Cardiac septum (tissue), 1 donor: ENCODE measurements at regions of chr3 and their contacts with region 1.

Region 1: GRCh38 chr3:128123538-128124368 is at the start of gene RUVBL1:
- DNase-seq: peak; percentile 98
- total RNA-seq, gene RUVBL1: 19.7 TPM

Region 2: DNA sequence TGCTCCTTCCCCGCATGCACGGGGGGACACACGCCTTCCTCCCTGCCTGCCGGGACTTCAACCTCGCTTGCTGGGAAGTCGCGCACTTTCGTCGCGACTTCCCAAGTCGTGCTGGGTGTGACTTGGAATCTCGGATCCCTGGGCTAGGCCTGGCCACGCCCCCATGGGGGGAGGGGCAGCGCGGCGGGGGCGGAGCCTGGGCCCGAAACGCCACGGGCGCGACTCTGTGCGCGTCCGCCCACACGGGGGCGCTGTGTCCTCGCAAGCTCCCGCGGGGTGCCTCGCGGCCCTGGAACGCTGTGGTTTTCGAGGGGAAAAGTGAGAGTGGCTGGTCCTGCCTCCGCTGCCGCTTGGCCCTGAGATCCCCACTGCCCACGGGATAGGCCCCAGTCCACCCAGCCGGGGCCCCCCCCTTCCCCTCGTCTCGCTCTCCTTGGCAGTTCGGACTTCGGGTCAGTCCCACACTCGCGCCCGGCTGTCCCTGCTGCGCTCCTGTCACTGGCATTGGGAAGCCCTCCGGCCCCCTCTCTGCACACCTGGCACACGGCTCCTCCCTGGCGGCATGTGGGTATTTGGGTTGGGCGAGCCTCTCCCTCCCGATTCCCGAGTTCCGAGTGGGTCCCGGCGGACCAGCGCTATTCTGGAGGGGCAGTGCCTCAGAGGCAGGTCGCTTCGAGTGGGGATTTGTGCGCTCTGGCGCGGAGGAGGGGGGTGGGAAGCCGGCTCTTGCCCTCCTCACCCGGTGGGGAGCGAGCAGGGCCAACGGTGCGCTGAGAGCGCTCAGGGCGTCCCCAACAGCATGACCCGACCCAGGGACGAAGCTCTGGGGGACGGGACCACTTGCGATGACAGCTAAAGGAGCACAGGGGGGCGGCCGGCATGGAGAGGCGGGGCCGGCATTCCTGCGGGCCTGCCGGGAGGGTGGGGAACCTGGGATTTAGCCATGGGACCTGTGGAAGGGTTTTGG is 48.0 kb before region 1 on chr3:
- intact Hi-C with region 1: loop called (anchors 5 kb)
- DNase-seq: peak; percentile 95

Region 3: DNA sequence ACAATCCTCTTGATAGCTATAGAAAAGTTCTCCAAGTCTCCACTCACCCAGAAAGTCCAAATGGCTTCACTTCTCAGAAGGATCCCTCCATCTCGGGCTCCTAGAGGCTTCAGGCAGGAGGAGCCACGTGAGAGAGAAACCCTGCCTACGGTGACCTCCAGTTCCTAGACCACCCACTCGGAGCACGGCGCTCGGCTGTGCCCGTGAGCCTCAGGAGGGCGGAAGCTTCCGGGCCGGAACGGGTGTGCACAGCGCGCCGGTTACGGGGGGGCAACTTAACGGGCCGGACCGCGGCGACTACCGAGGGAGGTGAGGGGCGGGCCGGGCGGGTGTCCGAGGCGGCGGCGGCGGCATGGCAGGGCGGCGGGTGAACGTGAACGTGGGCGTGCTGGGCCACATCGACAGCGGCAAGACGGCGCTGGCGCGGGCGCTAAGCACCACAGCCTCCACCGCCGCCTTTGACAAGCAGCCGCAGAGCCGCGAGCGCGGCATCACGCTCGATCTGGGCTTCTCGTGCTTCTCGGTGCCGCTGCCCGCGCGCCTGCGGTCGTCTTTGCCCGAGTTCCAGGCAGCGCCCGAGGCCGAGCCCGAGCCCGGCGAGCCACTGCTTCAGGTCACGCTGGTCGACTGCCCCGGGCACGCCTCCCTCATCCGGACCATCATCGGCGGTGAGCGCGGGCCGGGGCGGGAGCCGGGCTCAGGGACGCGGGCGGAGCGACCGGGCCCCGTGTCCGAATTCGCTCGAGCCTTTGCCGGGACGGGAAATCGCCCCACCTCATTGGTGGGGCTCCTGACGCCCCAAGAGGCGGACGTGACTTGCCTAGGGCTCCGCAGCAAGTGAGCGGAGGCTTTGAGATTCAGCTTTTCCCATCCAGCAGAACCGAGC is 29.6 kb after region 1 on chr3 and contains the start of gene EEFSEC:
- intact Hi-C with region 1: loop called (anchors 2 kb)
- DNase-seq: peak; percentile 91
- total RNA-seq, gene EEFSEC: 19.3 TPM

Region 4: DNA sequence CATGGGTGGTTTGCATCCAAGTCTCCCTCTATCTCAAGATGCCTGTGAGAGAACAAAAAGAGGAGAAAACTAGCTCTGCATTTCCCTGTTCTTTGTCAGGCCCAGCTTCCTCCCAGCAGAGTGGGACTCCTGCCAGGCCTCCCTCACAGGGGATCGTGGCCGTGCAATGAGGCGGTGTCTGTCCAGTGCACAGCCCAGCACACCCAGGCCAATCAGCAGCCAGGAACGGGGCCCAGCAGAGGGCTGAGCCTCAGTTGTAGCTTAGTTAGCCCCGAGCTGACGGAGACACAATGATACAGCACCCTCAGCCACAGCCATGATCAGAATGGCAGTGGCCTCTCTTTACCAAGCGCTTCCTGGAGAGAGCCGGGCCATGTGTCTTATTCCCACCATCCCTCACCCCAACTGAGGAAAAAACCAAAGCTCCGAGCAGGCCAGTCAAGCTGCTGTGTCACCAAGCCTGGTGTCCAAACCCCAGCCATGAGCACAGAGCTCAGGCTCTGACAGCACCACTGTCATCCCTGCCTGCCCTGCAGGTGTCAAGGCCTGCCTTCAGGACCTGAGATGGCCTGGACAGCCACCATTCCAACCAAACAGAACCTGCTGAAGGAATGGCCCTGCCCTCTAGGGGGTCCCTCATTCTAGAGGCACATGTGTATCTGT is 271.9 kb after region 1 on chr3:
- intact Hi-C with region 1: no loop called
- DNase-seq: peak; percentile 85